ENCODE measurements at regions of chr10 and their contacts with region 1.

Region 1: GRCh38 chr10:122980209-122981065 is at the start of gene PSTK:
- DNase-seq: peak; percentile 96

Region 2: GRCh38 chr10:122953827-122954730 is 26.4 kb before region 1 on chr10 and contains the start of gene C10orf88:
- CTCF ChIA-PET with region 1: no interaction called
- POLR2A ChIA-PET with region 1: interaction called, 17 read pairs
- DNase-seq: peak; percentile 100

Region 3: DNA sequence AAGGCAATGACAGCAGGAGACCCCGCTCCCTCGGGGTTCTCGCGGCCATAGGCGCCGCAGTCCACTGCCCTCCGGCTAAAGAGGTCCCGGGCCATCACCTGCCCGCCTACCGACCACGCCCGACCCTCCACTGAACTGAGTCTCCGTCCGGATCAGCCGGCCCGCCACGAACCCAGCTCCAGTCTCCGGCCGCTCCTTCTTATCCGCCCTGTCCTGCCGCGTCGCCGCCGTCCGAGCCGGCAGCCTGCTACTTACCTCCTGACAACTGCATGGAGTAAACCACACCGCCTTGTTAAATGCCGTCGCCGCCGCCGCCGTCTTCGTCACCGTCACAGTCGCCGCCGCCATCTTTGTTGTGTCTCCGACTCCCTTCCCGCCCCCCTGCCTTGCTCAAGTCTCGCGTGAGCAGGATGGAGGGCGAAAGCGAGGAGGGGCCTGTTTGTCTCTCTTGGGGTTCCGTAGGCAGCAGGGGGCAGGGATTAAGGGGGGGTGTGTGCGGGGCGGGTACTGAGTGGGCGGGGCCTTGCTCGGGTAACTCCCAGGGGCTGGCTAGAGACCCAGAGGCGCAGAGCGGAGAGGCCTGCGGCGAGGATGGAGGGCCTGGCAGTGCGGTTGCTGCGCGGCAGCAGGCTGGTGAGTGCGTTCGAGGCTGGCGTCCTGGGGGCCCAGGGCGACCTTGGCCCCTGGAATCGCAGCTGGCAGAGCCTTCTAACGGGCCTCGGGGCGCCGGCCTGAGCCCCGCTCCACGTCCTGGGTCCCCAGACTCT is 28.2 kb after region 1 on chr10 and contains the starts of genes ACADSB and IKZF5:
- CTCF ChIA-PET with region 1: interaction called, 4 read pairs
- POLR2A ChIA-PET with region 1: interaction called, 22 read pairs
- DNase-seq: peak; percentile 99

Region 4: DNA sequence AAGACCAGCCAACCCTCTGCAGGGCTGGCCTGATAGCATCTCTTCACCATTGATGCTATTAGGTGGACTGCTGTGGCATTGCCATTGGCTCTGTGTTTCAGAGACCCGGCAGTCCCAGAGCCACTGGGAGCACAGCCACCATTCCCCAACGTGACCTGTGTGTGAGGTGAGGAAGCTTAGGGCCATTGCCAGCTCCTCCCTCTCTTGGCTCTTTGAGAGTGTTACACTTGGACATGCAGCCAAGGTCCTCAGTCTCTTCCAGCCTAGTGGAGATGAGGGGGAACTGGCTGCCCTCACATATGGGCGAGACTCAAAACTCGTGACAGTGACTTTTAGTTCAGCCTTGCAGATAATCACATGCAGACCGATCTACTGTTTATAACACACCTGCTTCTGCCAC is 116.0 kb after region 1 on chr10:
- CTCF ChIA-PET with region 1: no interaction called
- POLR2A ChIA-PET with region 1: no interaction called
- DNase-seq: no peak

Region 5: DNA sequence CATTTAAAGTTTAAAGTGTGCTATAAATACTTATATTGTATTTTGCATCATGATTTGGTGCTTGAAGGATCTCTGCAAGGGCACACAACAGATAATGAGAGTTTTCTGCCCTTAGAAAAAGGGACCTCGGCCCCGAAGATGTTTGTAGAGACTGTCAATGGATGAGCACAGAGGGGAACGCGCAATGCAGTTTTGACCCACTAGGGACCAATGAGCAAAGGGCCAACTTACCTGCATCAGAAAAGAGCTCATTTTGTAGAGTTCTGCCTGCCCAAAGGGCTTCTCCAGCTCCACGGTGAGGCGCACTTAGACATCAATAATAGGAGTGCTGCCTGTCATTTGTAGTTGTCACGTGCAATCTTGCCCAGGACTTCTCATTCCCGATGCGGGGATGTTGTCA is 264.8 kb after region 1 on chr10:
- CTCF ChIA-PET with region 1: no interaction called
- POLR2A ChIA-PET with region 1: no interaction called
- DNase-seq: peak; percentile 22

Measured in HEK293T (cell line).